ENCODE measurements at regions of chr5 and their contacts with region 1.

Region 1: DNA sequence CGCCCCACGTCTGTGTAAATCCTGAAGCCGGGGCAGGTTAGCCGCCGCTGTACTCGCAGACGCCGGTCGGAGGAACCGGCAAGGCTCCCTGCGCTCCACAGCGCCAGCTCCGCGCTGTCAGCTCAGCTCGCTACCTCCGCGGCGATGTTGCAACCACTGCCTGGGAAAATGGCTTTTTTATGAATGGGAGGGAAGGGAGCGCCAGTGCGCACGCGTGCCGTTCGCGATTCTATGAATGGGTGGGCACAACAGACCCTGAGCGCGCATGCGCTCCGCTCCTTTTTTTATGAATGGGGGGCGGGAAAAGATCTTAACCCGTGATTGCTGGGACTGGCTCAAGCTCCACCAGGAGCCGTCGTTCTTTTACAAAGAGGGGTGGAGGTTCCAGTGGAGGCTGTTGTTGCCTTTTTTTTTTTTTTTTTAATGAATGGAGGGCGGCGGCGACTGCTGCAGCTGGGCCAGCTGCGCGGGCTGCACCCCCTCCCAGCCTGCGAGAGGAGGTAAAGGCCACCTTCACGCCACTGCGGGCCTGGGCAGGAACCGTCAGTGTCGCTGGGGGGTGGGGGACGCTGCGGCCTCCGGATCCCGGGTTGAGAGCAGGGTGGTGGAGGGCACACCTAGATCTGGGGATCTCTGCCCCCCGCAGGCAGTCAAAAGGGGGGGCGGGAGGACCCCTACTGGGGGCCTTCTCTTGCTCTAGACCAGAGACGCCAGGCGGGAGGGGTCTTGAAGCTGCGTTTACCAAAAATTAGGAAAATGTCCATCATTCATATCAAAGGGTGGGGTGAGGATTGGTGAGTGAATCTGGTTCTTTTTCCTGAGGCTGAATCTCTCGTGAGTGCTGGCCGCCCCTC is at the start of gene SPRY4:
- DNase-seq: peak; percentile 97
- H3K4me3 Mint-ChIP-seq: peak within 1 kb of the TSS; percentile 98
- H3K27ac Mint-ChIP-seq: peak within 1 kb of the TSS; percentile 92
- H3K4me1 Mint-ChIP-seq: peaks cover 44% of the 10 kb centered on the region
- H3K27me3 Mint-ChIP-seq: no peaks in the 10 kb centered on the region
- CTCF ChIP-seq: no peak
- total RNA-seq, gene SPRY4: 23.6 and 29.4 TPM in 2 replicates

Region 2: DNA sequence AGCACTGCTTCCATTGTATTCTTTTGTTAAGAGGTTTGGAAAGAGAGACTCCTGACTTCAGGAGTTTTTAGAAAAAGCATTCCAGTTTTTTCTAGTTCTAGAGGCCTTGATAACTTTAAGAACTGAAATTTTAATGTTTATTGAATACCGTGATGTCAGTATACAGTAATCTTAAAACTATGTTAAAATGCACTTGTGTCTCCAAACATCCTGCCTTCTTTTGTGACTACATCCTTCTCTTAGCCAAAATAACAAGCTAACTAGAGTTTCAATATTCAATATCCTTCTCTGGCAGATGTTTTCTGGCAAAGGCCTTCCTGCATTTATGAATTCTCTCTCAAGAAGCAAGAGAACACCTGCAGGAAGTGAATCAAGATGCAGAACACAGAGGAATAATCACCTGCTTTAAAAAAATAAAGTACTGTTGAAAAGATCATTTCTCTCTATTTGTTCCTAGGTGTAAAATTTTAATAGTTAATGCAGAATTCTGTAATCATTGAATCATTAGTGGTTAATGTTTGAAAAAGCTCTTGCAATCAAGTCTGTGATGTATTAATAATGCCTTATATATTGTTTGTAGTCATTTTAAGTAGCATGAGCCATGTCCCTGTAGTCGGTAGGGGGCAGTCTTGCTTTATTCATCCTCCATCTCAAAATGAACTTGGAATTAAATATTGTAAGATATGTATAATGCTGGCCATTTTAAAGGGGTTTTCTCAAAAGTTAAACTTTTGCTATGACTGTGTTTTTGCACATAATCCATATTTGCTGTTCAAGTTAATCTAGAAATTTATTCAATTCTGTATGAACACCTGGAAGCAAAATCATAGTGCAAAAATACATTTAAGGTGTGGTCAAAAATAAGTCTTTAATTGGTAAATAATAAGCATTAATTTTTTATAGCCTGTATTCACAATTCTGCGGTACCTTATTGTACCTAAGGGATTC is 173.4 kb before region 1 on chr5:
- CTCF ChIA-PET with region 1: interaction called, 7 read pairs
- intact Hi-C with region 1: loop called (anchors 1 kb)
- DNase-seq: peak; percentile 78
- H3K4me3 Mint-ChIP-seq: no peak overlapping the region
- H3K27ac Mint-ChIP-seq: no peak overlapping the region
- H3K4me1 Mint-ChIP-seq: no peaks in the 10 kb centered on the region
- H3K27me3 Mint-ChIP-seq: no peaks in the 10 kb centered on the region
- CTCF ChIP-seq: peak; percentile 80

Region 3: GRCh38 chr5:142215915-142216681 is 109.0 kb before region 1 on chr5:
- CTCF ChIA-PET with region 1: interaction called, 4 read pairs
- intact Hi-C with region 1: loop called (anchors 2 kb)
- DNase-seq: peak; percentile 82
- H3K4me3 Mint-ChIP-seq: peak overlapping the region; percentile 42
- H3K27ac Mint-ChIP-seq: no peak overlapping the region
- H3K4me1 Mint-ChIP-seq: peaks cover 33% of the 10 kb centered on the region
- H3K27me3 Mint-ChIP-seq: peaks cover 14% of the 10 kb centered on the region
- CTCF ChIP-seq: no peak

Region 4: DNA sequence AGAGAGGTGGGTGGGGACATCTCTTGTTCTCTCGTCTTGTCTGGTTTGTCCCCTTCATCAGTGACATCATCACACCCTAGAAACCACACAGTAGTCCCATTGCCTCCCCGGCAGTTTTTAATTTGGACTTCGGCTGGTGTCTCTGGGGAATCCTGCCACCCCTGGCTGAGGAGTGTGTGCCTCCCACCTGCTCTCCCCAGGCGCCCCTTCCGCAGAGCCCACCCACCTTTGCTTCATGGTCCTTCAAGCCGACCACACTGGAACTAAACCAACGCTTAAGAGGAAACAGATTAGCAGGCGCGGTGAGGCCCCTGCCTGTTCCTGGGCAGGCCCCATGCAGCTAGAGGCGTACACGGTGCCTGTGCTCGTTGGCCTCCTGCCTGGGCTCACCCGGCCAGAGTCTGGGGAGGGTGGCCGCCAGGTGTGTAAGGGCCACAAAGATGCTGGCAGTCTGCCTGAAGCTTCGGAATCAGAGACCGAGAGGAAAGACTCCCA is 107.3 kb after region 1 on chr5:
- CTCF ChIA-PET with region 1: no interaction called
- intact Hi-C with region 1: loop called (anchors 10 kb)
- DNase-seq: peak; percentile 28
- H3K4me3 Mint-ChIP-seq: no peak overlapping the region
- H3K27ac Mint-ChIP-seq: no peak overlapping the region
- H3K4me1 Mint-ChIP-seq: peaks cover 34% of the 10 kb centered on the region
- H3K27me3 Mint-ChIP-seq: no peaks in the 10 kb centered on the region
- CTCF ChIP-seq: no peak

Region 5: GRCh38 chr5:142446131-142446959 is 121.2 kb after region 1 on chr5:
- CTCF ChIA-PET with region 1: no interaction called
- intact Hi-C with region 1: no loop called
- DNase-seq: peak; percentile 20
- H3K4me3 Mint-ChIP-seq: no peak overlapping the region
- H3K27ac Mint-ChIP-seq: peak overlapping the region; percentile 51
- H3K4me1 Mint-ChIP-seq: peaks cover 21% of the 10 kb centered on the region
- H3K27me3 Mint-ChIP-seq: no peaks in the 10 kb centered on the region
- CTCF ChIP-seq: no peak

Region 6: GRCh38 chr5:142507531-142508372 is 182.7 kb after region 1 on chr5:
- CTCF ChIA-PET with region 1: interaction called, 3 read pairs
- intact Hi-C with region 1: loop called (anchors 10 kb)
- DNase-seq: peak; percentile 71
- H3K4me3 Mint-ChIP-seq: peak overlapping the region; percentile 66
- H3K27ac Mint-ChIP-seq: peak overlapping the region; percentile 83
- H3K4me1 Mint-ChIP-seq: peaks cover 66% of the 10 kb centered on the region
- H3K27me3 Mint-ChIP-seq: no peaks in the 10 kb centered on the region
- CTCF ChIP-seq: no peak

Measured in Calu3 (cell line).